GM12878 (cell line): ENCODE measurements at regions of chr17 and their contacts with region 1.

Region 1: GRCh38 chr17:41648411-41649195 is 24.2 kb upstream of the KRT17 start:
- DNase-seq: no peak
- ATAC-seq: peak; percentile 97
- H3K4me3 ChIP-seq: peak overlapping the region; percentile 57; the same call in 1 of the 2 replicates
- H3K27ac ChIP-seq: no peak overlapping the region
- H3K4me1 ChIP-seq: peaks cover 9% of the 10 kb centered on the region
- H3K27me3 ChIP-seq: no peaks in the 10 kb centered on the region
- CTCF ChIP-seq: peak; percentile 90 to 95 (median 91)
- EP300 ChIP-seq: no peak
- POLR2A ChIP-seq: no peak
- RAD21 ChIP-seq: peak; percentile 58

Region 2: DNA sequence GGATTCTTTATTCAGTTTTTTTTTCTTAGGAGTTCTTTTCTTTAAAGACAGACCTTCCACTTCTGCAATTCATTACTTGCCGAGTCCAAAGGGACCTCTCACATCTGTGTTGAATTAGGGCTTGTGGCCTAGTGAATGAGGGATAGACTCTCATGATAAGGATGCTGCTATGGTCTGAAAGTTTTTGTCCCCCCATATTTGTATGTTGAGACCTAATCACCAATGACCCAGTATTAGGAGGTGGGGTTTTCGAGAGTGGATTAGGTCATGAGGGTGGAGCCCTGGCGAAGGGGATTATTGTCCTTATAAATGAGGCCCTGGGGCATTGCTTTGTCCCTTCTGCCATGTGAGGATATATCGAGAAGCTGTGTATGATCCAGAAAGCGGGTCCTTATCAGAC is 791.1 kb before region 1 on chr17:
- CTCF ChIA-PET with region 1: interaction called, 8 read pairs
- POLR2A ChIA-PET with region 1: no interaction called
- RAD21 ChIA-PET with region 1: interaction called, 4 read pairs
- SMC1A ChIA-PET with region 1: interaction called, 8 read pairs
- in situ Hi-C with region 1: no loop called
- intact Hi-C with region 1: loop called (anchors 5 kb)
- DNase-seq: no peak
- ATAC-seq: no peak
- H3K4me3 ChIP-seq: no peak overlapping the region
- H3K27ac ChIP-seq: no peak overlapping the region
- H3K4me1 ChIP-seq: no peaks in the 10 kb centered on the region
- H3K27me3 ChIP-seq: peaks cover 0 to 4% of the 10 kb centered on the region in 2 experiments; a peak in 3 of 4 replicates
- CTCF ChIP-seq: no peak
- EP300 ChIP-seq: no peak
- POLR2A ChIP-seq: no peak
- RAD21 ChIP-seq: no peak

Region 3: GRCh38 chr17:41548844-41549595 is 99.6 kb before region 1 on chr17:
- CTCF ChIA-PET with region 1: interaction called, 133 read pairs
- POLR2A ChIA-PET with region 1: no interaction called
- RAD21 ChIA-PET with region 1: interaction called, 32 read pairs
- SMC1A ChIA-PET with region 1: interaction called, 33 read pairs
- in situ Hi-C with region 1: no loop called
- intact Hi-C with region 1: loop called (anchors 1 kb)
- DNase-seq: peak; percentile 12
- ATAC-seq: peak; percentile 95
- H3K4me3 ChIP-seq: no peak overlapping the region
- H3K27ac ChIP-seq: no peak overlapping the region
- H3K4me1 ChIP-seq: no peaks in the 10 kb centered on the region
- H3K27me3 ChIP-seq: no peaks in the 10 kb centered on the region; a peak in 2 of 4 replicates
- CTCF ChIP-seq: peak; percentile 86 to 93 (median 91)
- EP300 ChIP-seq: no peak
- POLR2A ChIP-seq: no peak
- RAD21 ChIP-seq: peak; percentile 73

Region 4: GRCh38 chr17:41602524-41602923 is 46.1 kb before region 1 on chr17:
- CTCF ChIA-PET with region 1: no interaction called
- POLR2A ChIA-PET with region 1: no interaction called
- RAD21 ChIA-PET with region 1: no interaction called
- SMC1A ChIA-PET with region 1: no interaction called
- in situ Hi-C with region 1: no loop called
- intact Hi-C with region 1: no loop called
- DNase-seq: no peak
- ATAC-seq: no peak
- H3K4me3 ChIP-seq: no peak overlapping the region
- H3K27ac ChIP-seq: no peak overlapping the region
- H3K4me1 ChIP-seq: no peaks in the 10 kb centered on the region
- H3K27me3 ChIP-seq: no peaks in the 10 kb centered on the region; a peak in 1 of 4 replicates
- CTCF ChIP-seq: no peak
- EP300 ChIP-seq: no peak
- POLR2A ChIP-seq: no peak
- RAD21 ChIP-seq: no peak

Region 5: DNA sequence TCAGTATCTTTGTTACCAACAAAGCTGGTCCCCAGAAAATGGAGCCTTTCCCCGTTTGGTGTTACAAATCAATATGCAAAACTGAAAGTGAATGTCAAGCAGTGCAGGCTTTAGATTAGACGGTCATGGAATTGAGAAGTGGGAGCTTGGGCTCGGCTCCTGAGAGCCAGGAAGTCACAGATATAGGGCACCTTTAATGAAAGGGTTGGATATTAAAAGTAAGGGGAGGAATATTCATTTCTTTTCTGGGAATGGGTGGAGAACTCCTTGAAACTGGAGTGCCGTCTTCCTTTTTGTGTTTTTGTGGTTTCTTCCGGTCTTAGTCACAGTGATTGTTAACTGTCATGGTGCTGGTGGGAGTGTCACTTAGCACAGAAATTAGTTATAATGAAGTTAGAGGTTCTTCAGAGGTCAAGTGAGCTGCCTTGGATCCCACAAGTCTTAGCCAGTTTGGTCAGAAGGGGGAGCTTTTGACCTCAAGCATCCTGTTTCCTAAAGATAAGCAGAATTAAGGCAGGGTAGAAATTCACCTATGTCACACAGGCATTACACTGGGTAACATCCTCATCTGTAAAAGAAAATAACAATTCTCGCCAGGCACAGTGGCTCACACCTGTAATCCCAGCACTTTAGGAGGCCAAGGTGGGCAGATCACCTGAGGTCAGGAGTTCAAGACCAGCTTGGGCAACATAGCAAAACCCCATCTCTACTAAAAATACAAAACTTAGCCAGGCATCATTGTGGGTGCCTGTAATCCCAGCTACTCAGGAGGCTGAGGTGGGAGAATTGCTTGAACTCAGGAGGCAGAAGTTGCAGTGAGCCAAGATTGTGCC is 30.5 kb after region 1 on chr17:
- CTCF ChIA-PET with region 1: interaction called, 12 read pairs
- POLR2A ChIA-PET with region 1: interaction called, 4 read pairs
- RAD21 ChIA-PET with region 1: no interaction called
- SMC1A ChIA-PET with region 1: interaction called, 3 read pairs
- in situ Hi-C with region 1: no loop called
- intact Hi-C with region 1: no loop called
- DNase-seq: peak; percentile 84
- ATAC-seq: peak; percentile 82
- H3K4me3 ChIP-seq: peak overlapping the region; percentile 51
- H3K27ac ChIP-seq: peak overlapping the region; percentile 88
- H3K4me1 ChIP-seq: peaks cover 7% of the 10 kb centered on the region
- H3K27me3 ChIP-seq: no peaks in the 10 kb centered on the region
- CTCF ChIP-seq: peak; percentile 29 to 63 (median 33); a peak in 4 of 6 replicates
- EP300 ChIP-seq: no peak
- POLR2A ChIP-seq: no peak
- RAD21 ChIP-seq: peak; percentile 51; the same call in 1 of the 2 replicates

Region 6: GRCh38 chr17:41710468-41711090 is 62.0 kb after region 1 on chr17:
- CTCF ChIA-PET with region 1: no interaction called
- POLR2A ChIA-PET with region 1: no interaction called
- RAD21 ChIA-PET with region 1: no interaction called
- SMC1A ChIA-PET with region 1: no interaction called
- in situ Hi-C with region 1: no loop called
- intact Hi-C with region 1: no loop called
- DNase-seq: no peak
- ATAC-seq: no peak
- H3K4me3 ChIP-seq: no peak overlapping the region
- H3K27ac ChIP-seq: no peak overlapping the region
- H3K4me1 ChIP-seq: no peaks in the 10 kb centered on the region
- H3K27me3 ChIP-seq: no peaks in the 10 kb centered on the region; a peak in 3 of 4 replicates
- CTCF ChIP-seq: no peak
- EP300 ChIP-seq: no peak
- POLR2A ChIP-seq: no peak
- RAD21 ChIP-seq: no peak